Activated T-helper 2 cell treated with anti-CD3 and anti-CD28 coated beads, Interferon-gamma antibody, Interleukin-2, Interleukin-4, amounts not matched to agents 10 μg/mL and 5 μg/mL and 100 μg/mL, durations not matched to agents 14 hours and 24 hours and 36 hours (primary cell): ENCODE measurements at regions of chr18 and their contacts with region 1.

Region 1: GRCh38 chr18:75884728-75885127 is 457.2 kb upstream of the SMIM21 start:
- DNase-seq: no peak
- H3K4me3 Mint-ChIP-seq: no peak overlapping the region
- H3K27ac Mint-ChIP-seq: no peak overlapping the region
- H3K4me1 Mint-ChIP-seq: no peaks in the 10 kb centered on the region
- H3K27me3 Mint-ChIP-seq: no peaks in the 10 kb centered on the region

Region 2: GRCh38 chr18:75276818-75277609 is 607.7 kb before region 1 on chr18:
- intact Hi-C with region 1: no loop called
- DNase-seq: no peak
- H3K4me3 Mint-ChIP-seq: no peak overlapping the region
- H3K27ac Mint-ChIP-seq: peak overlapping the region; percentile 21
- H3K4me1 Mint-ChIP-seq: peaks cover 8% of the 10 kb centered on the region
- H3K27me3 Mint-ChIP-seq: no peaks in the 10 kb centered on the region

Region 3: GRCh38 chr18:75507636-75508035 is 377.1 kb before region 1 on chr18:
- intact Hi-C with region 1: no loop called
- DNase-seq: no peak
- H3K4me3 Mint-ChIP-seq: no peak overlapping the region
- H3K27ac Mint-ChIP-seq: no peak overlapping the region
- H3K4me1 Mint-ChIP-seq: no peaks in the 10 kb centered on the region
- H3K27me3 Mint-ChIP-seq: no peaks in the 10 kb centered on the region

Region 4: GRCh38 chr18:75783566-75784397 is 100.9 kb before region 1 on chr18:
- intact Hi-C with region 1: no loop called
- DNase-seq: no peak
- H3K4me3 Mint-ChIP-seq: no peak overlapping the region
- H3K27ac Mint-ChIP-seq: no peak overlapping the region
- H3K4me1 Mint-ChIP-seq: no peaks in the 10 kb centered on the region
- H3K27me3 Mint-ChIP-seq: no peaks in the 10 kb centered on the region

Region 5: GRCh38 chr18:75830828-75831227 is 53.9 kb before region 1 on chr18:
- intact Hi-C with region 1: no loop called
- DNase-seq: no peak
- H3K4me3 Mint-ChIP-seq: no peak overlapping the region
- H3K27ac Mint-ChIP-seq: no peak overlapping the region
- H3K4me1 Mint-ChIP-seq: no peaks in the 10 kb centered on the region
- H3K27me3 Mint-ChIP-seq: no peaks in the 10 kb centered on the region

Region 6: GRCh38 chr18:76349067-76349715 is 464.5 kb after region 1 on chr18:
- intact Hi-C with region 1: loop called (anchors 10 kb)
- DNase-seq: peak; percentile 50
- H3K4me3 Mint-ChIP-seq: no peak overlapping the region
- H3K27ac Mint-ChIP-seq: no peak overlapping the region
- H3K4me1 Mint-ChIP-seq: peaks cover 6% of the 10 kb centered on the region
- H3K27me3 Mint-ChIP-seq: peaks cover 3% of the 10 kb centered on the region